HEK293 (cell line): ENCODE measurements at regions of chr1 and their contacts with region 1.

Region 1: GRCh38 chr1:54944610-54945544 is 35.6 kb upstream of the TMEM61 start:
- H3K4me3 ChIP-seq: no peak overlapping the region
- H3K27ac ChIP-seq: no peak overlapping the region
- H3K4me1 ChIP-seq: no peaks in the 10 kb centered on the region
- CTCF ChIP-seq: peak; percentile 41

Region 2: GRCh38 chr1:54886724-54887664 is 57.9 kb before region 1 on chr1 and contains the start of gene DHCR24:
- CTCF ChIA-PET with region 1: interaction called, 24 read pairs
- POLR2A ChIA-PET with region 1: interaction called, 11 read pairs
- H3K4me3 ChIP-seq: peak within 1 kb of the TSS; percentile 89
- H3K27ac ChIP-seq: peak within 1 kb of the TSS; percentile 92
- H3K4me1 ChIP-seq: peaks cover 13% of the 10 kb centered on the region
- CTCF ChIP-seq: peak; percentile 52

Region 3: GRCh38 chr1:54934869-54935268 is 10.0 kb before region 1 on chr1:
- CTCF ChIA-PET with region 1: interaction called, 35 read pairs
- POLR2A ChIA-PET with region 1: no interaction called
- H3K4me3 ChIP-seq: no peak overlapping the region
- H3K27ac ChIP-seq: no peak overlapping the region
- H3K4me1 ChIP-seq: no peaks in the 10 kb centered on the region
- CTCF ChIP-seq: no peak

Region 4: GRCh38 chr1:54987919-54988705 is 43.2 kb after region 1 on chr1:
- CTCF ChIA-PET with region 1: interaction called, 22 read pairs
- POLR2A ChIA-PET with region 1: no interaction called
- H3K4me3 ChIP-seq: no peak overlapping the region
- H3K27ac ChIP-seq: no peak overlapping the region
- H3K4me1 ChIP-seq: peaks cover 5% of the 10 kb centered on the region; the same call in 1 of the 2 replicates
- CTCF ChIP-seq: no peak

Region 5: DNA sequence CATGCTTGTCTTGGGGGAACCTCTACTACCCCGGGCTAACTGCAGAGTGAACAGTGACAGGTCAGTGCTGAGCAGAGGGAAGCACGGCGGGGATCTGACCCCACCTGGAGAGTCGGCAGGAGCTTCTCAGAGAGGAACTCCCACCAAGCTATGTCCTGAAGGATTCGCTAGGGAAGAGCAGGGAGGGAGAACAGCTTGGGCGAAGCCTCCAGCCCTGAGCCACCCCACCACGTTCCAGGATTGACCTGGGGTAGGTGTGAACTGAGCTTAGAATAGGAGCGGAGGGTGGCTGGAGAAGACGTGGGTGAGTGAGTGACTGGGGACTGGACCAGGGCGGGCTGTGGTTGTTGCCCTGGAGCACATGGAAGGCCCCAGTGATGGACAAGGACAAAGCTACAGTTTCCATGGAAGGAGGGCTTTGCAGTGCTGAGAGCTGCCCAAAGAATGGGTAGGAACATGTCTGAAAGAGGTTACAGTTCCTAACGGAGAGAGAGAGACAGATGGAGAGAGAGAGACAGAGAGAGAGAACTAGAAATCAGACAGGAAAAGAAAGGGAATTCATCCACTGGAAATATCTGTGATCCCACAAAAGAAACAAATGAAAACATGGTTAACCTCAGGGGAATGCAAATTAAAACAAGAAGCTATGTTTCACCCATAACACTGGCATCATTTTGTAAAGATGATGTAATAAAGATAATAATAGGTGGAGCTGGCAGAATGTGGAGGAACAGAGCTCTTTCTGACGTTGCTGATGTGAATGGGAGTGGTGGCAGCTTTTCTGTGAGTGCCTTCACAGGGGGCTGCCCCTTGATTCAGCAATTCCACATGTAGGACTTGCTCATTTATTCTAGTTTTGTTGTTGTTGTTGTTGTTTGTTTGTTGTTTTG is 71.1 kb after region 1 on chr1:
- CTCF ChIA-PET with region 1: interaction called, 66 read pairs
- POLR2A ChIA-PET with region 1: no interaction called
- H3K4me3 ChIP-seq: no peak overlapping the region
- H3K27ac ChIP-seq: no peak overlapping the region
- H3K4me1 ChIP-seq: no peaks in the 10 kb centered on the region
- CTCF ChIP-seq: no peak

Region 6: DNA sequence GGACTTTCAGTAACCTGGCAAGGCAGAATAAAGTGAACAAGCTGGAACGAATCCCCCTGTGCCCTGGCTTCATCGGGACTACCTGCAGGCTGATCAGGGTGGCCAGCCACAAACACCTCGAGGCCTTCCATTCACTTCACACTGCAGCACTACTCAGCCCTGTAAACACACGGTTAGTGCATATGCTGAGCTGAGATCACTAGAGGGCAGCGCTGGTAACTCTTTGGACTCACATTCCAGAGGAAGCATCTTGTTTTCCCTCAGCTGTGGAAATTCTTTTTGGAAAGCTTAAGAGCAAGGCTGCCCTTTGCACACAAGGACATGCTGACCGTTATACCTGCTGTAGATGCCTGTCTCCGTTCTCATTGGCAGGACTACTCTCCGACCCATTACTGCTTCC is 126.6 kb after region 1 on chr1:
- CTCF ChIA-PET with region 1: interaction called, 10 read pairs
- POLR2A ChIA-PET with region 1: no interaction called
- H3K4me3 ChIP-seq: no peak overlapping the region
- H3K27ac ChIP-seq: no peak overlapping the region
- H3K4me1 ChIP-seq: no peaks in the 10 kb centered on the region
- CTCF ChIP-seq: no peak; the same call in 1 of the 2 replicates

Region 7: GRCh38 chr1:55179177-55179835 is 234.4 kb after region 1 on chr1:
- CTCF ChIA-PET with region 1: no interaction called
- POLR2A ChIA-PET with region 1: no interaction called
- H3K4me3 ChIP-seq: no peak overlapping the region
- H3K27ac ChIP-seq: no peak overlapping the region
- H3K4me1 ChIP-seq: no peaks in the 10 kb centered on the region
- CTCF ChIP-seq: no peak